OCI-LY7 (cell line): ENCODE measurements at regions of chr18 and their contacts with region 1.

Region 1: GRCh38 chr18:10851824-10852319 is 297.5 kb downstream of the PIEZO2 start:
- DNase-seq: peak; percentile 80
- H3K4me3 ChIP-seq: no peak overlapping the region
- H3K27ac ChIP-seq: peak overlapping the region; percentile 0
- H3K4me1 ChIP-seq: peaks cover 25% of the 10 kb centered on the region
- CTCF ChIP-seq: peak; percentile 97

Region 2: DNA sequence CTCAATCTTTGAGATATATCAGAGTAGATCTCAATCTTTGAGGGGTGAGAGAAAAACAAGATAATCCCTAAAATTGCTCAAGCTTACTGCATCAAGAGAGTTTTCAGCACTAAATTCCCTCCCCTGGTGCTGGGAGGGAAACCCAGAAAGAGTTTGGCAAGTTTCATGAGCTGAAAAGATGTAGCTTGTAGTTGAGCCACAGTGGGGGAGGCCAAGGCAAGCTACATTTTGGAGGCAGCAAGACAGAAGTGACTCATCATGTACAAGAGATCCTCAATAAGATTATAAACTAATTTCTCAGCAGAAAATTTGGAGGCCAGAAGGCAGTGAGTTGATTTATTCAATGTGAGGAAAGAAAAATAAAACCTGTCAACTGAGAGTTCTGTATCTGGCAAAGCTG is 10.7 kb before region 1 on chr18:
- CTCF ChIA-PET with region 1: no interaction called
- POLR2A ChIA-PET with region 1: interaction called, 16 read pairs
- intact Hi-C with region 1: no loop called
- DNase-seq: no peak
- H3K4me3 ChIP-seq: no peak overlapping the region
- H3K27ac ChIP-seq: no peak overlapping the region
- H3K4me1 ChIP-seq: no peaks in the 10 kb centered on the region
- CTCF ChIP-seq: no peak

Region 3: GRCh38 chr18:10953672-10954071 is 101.8 kb after region 1 on chr18:
- CTCF ChIA-PET with region 1: no interaction called
- POLR2A ChIA-PET with region 1: interaction called, 6 read pairs
- intact Hi-C with region 1: loop called (anchors 1 kb)
- DNase-seq: peak; percentile 91
- H3K4me3 ChIP-seq: peak overlapping the region; percentile 11
- H3K27ac ChIP-seq: peak overlapping the region; percentile 99
- H3K4me1 ChIP-seq: peaks cover 79% of the 10 kb centered on the region
- CTCF ChIP-seq: 0 out of 2 replicates have a peak, but pooled peaks have one; percentile 11

Region 4: DNA sequence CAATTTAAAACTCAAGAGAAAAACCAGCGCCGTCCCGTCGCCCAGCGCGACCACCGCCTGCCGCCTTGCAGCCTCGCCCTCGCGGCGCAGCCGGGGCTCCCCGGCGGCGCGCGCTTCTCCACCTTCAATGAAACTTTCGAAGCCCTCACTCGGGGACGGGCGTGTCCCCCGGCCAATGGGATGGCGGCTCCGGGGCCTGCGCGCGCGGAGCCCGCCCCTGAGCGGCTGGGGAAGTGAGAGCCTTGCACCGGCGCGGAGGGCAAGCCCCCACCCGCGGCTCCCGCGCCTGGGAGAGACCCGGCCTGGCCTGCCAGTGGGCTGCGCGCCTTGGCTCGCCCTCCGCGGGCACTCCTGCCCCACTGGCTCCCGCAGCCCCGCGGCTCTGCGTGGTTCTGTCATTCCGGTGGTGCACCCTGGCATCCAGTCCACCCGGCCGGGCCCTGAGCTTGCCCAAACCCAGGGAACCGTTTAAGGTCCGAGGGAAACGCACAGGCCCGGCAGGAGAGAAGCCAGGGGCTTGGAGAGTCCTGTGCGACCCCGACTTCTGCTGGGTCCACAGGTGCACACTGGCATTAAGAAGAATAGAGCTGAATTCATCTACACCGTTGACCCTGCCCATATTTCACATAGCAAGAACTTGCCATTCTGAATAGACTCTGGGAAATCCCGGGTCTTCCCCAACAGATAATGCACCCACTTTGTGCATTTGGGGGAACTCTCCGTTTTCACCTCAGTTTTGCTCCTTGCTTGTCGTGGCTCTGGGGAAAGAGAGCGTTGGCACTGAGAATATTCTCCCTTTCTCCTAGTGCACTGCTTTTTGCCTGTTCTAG is 297.8 kb after region 1 on chr18 and contains the start of gene PIEZO2:
- CTCF ChIA-PET with region 1: interaction called, 8 read pairs
- POLR2A ChIA-PET with region 1: interaction called, 3 read pairs
- intact Hi-C with region 1: loop called (anchors 1 kb)
- DNase-seq: no peak
- H3K4me3 ChIP-seq: no peak within 1 kb of the TSS
- H3K27ac ChIP-seq: no peak within 1 kb of the TSS
- H3K4me1 ChIP-seq: no peaks in the 10 kb centered on the region
- CTCF ChIP-seq: no peak
- total RNA-seq, gene PIEZO2: 0.95 and 2.6 TPM in 2 replicates

Region 5: GRCh38 chr18:11518788-11519685 is 667.2 kb after region 1 on chr18:
- CTCF ChIA-PET with region 1: no interaction called
- POLR2A ChIA-PET with region 1: no interaction called
- intact Hi-C with region 1: loop called (anchors 10 kb)
- DNase-seq: peak; percentile 82
- H3K4me3 ChIP-seq: no peak overlapping the region
- H3K27ac ChIP-seq: no peak overlapping the region
- H3K4me1 ChIP-seq: no peaks in the 10 kb centered on the region
- CTCF ChIP-seq: peak; percentile 96